Breast epithelium (tissue), 4 donors: ENCODE measurements at regions of chr9 and their contacts with region 1.

Region 1: GRCh38 chr9:112194969-112195431 is 19.9 kb upstream of the SUSD1 start:
- DNase-seq: no peak
- H3K4me3 ChIP-seq: no peak overlapping the region
- H3K27ac ChIP-seq: peak overlapping the region; percentile 42 to 76
- H3K4me1 ChIP-seq: no peaks in the 10 kb centered on the region
- H3K27me3 ChIP-seq: no peaks in the 10 kb centered on the region
- CTCF ChIP-seq: no peak
- POLR2A ChIP-seq: no peak

Region 2: GRCh38 chr9:112226088-112226487 is 31.1 kb after region 1 on chr9:
- intact Hi-C with region 1: loop called (anchors 2 kb)
- DNase-seq: no peak
- H3K4me3 ChIP-seq: no peak overlapping the region
- H3K27ac ChIP-seq: no peak overlapping the region
- H3K4me1 ChIP-seq: no peaks in the 10 kb centered on the region
- H3K27me3 ChIP-seq: no peaks in the 10 kb centered on the region
- CTCF ChIP-seq: no peak
- POLR2A ChIP-seq: no peak

Region 3: GRCh38 chr9:113331780-113332179 is 1136.8 kb after region 1 on chr9:
- intact Hi-C with region 1: no loop called
- DNase-seq: no peak
- H3K4me3 ChIP-seq: no peak overlapping the region
- H3K27ac ChIP-seq: no peak overlapping the region
- H3K4me1 ChIP-seq: no peaks in the 10 kb centered on the region
- H3K27me3 ChIP-seq: no peaks in the 10 kb centered on the region
- CTCF ChIP-seq: no peak
- POLR2A ChIP-seq: no peak